ENCODE measurements at regions of chr1 and their contacts with region 1.

Region 1: GRCh38 chr1:28248283-28249012 is 10.9 kb upstream of the SESN2 start:
- DNase-seq: peak; percentile 70
- CTCF ChIP-seq: peak; percentile 92

Region 2: DNA sequence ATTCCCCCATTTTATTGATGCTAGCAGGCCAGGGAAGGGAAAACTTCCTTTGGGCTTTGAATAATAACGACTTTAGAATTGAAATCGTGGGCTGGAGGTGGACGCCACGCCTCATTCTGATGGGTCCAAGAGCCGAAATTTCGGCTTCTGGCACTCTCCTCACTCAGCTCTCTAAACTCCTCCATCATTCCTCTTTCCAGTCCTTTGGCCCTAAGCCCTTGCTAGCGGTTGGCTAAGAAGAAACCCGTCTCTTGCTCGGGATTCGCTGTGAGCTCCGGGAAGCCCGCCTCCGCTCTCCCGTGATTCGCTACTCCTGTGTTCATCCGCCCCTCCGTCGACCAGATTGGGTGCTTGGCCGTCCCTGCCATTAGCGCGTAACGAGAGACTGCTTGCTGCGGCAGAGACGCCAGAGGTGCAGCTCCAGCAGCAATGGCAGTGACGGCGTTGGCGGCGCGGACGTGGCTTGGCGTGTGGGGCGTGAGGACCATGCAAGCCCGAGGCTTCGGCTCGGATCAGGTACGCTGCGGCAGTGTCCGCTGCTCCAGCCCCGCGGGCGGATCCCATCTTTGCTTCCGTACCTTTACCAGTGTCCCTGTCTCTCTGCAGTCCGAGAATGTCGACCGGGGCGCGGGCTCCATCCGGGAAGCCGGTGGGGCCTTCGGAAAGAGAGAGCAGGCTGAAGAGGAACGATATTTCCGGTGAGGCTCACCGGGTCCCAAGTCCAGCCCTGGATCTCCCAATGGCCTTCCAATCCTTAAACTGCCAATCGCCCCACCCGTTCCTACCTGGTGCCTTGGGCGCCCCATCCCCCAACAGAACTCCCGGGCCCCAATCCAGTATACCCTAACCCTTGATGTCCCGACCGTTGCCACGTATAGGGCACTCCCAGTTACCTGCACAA is 12.4 kb before region 1 on chr1 and contains the start of gene ATP5IF1:
- CTCF ChIA-PET with region 1: interaction called, 63 read pairs
- POLR2A ChIA-PET with region 1: interaction called, 25 read pairs
- DNase-seq: peak; percentile 99
- CTCF ChIP-seq: no peak

Region 3: GRCh38 chr1:28266920-28267322 is 18.5 kb after region 1 on chr1:
- CTCF ChIA-PET with region 1: interaction called, 111 read pairs
- POLR2A ChIA-PET with region 1: interaction called, 3 read pairs
- DNase-seq: no peak
- CTCF ChIP-seq: no peak

Region 4: DNA sequence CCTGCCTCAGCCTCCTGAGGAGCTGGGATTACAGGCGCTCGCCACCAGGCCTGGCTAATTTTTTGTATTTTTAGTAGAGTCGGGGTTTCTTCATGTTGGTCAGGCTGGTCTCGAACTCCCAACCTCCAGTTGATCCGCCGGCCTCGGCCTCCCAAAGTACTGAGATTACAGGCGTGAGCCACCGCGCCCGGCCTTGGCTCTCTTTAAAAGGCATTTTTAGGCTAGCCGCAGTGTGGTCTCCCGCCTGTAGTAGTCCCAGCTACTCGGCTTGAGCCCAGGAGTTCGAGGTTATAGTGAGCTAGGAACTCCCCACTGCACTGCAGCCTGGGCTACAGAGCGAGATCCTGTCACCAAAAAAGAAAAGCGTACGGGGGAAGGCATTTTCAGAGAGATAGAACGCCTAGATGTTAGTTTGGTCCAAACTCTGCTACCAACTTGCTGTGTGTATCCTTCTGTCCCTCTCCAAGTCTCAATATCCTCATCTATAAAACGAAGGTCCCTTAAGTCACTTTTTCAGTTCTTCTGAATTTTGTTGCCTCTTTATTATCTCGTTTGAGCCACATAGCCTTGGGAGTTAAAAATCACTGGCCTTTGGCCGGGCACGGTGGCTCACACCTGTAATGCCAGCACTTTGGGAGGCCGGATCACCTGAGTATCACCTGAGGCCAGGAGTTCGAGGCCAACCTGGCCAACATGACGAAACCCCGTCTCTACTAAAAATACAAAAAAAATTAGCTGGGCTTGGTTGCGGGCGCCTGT is 81.1 kb after region 1 on chr1:
- CTCF ChIA-PET with region 1: interaction called, 13 read pairs
- POLR2A ChIA-PET with region 1: no interaction called
- DNase-seq: no peak
- CTCF ChIP-seq: no peak

Region 5: GRCh38 chr1:28369371-28370238 is 121.2 kb after region 1 on chr1 and contains the start of gene PHACTR4:
- CTCF ChIA-PET with region 1: interaction called, 14 read pairs
- POLR2A ChIA-PET with region 1: no interaction called
- DNase-seq: peak; percentile 94
- CTCF ChIP-seq: no peak

Measured in GM10248 (cell line).